PC-3 (cell line): ENCODE measurements at regions of chr1 and their contacts with region 1.

Region 1: DNA sequence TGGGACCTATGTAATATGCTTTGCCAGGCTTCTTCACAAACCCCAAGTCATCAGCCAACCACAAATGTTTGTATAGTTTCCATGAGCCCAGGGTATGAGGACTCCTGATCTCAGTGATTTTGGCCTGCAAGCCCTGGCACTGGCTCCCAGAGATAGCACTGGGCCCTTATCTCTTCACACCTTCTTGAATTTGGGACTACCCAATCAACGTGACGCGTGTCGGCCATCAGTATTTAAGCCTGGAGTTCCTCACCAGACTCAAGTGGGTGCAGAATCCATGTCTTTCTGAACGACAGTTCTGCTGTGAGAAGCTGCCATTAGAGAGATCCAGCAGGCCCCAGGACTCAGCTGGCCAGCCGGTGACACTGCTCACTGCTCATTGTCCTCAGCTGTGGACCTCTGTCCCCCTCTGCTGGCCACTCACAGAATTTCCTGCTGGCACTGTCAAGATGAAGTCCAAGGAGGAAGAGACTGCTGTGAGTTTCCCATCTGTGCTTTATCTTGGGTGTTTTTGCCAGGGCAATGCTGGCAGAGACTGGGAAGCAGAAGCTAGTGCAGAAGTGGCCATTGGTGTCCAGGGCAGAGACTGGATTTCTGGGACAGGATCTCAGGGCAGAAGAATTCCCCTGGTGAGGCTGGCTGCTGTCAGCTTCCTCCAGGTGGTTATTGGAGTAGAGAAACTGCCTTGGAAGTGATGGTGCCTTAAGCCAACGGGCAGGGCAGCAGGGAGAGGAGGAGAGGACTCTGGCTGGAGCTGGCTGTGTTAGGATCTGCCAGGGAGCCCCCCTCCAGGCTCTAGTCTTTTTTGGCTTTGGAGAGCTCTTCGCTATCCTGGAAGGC is 28.4 kb downstream of the TMCC2 start:
- DNase-seq: peak; percentile 95
- ATAC-seq: peak; percentile 98
- H3K4me3 ChIP-seq: no peak overlapping the region
- H3K27ac ChIP-seq: no peak overlapping the region
- H3K4me1 ChIP-seq: peaks cover 12% of the 10 kb centered on the region
- H3K27me3 ChIP-seq: no peaks in the 10 kb centered on the region
- CTCF ChIP-seq: peak; percentile 98

Region 2: GRCh38 chr1:204806943-204807687 is 449.0 kb before region 1 on chr1:
- CTCF ChIA-PET with region 1: no interaction called
- POLR2A ChIA-PET with region 1: no interaction called
- intact Hi-C with region 1: loop called (anchors 5 kb)
- DNase-seq: peak; percentile 98
- ATAC-seq: peak; percentile 97
- H3K4me3 ChIP-seq: peak overlapping the region; percentile 67
- H3K27ac ChIP-seq: no peak overlapping the region
- H3K4me1 ChIP-seq: peaks cover 5% of the 10 kb centered on the region; the same call in 1 of the 2 replicates
- H3K27me3 ChIP-seq: 0 out of 2 replicates have a peak, but pooled peaks cover 3% of the 10 kb centered on the region
- CTCF ChIP-seq: peak; percentile 100

Region 3: GRCh38 chr1:204989266-204990058 is 266.7 kb before region 1 on chr1:
- CTCF ChIA-PET with region 1: interaction called, 5 read pairs
- POLR2A ChIA-PET with region 1: no interaction called
- intact Hi-C with region 1: loop called (anchors 1 kb)
- DNase-seq: peak; percentile 94
- ATAC-seq: peak; percentile 82
- H3K4me3 ChIP-seq: no peak overlapping the region
- H3K27ac ChIP-seq: no peak overlapping the region
- H3K4me1 ChIP-seq: no peaks in the 10 kb centered on the region
- H3K27me3 ChIP-seq: peaks cover 89% of the 10 kb centered on the region
- CTCF ChIP-seq: peak; percentile 100

Region 4: DNA sequence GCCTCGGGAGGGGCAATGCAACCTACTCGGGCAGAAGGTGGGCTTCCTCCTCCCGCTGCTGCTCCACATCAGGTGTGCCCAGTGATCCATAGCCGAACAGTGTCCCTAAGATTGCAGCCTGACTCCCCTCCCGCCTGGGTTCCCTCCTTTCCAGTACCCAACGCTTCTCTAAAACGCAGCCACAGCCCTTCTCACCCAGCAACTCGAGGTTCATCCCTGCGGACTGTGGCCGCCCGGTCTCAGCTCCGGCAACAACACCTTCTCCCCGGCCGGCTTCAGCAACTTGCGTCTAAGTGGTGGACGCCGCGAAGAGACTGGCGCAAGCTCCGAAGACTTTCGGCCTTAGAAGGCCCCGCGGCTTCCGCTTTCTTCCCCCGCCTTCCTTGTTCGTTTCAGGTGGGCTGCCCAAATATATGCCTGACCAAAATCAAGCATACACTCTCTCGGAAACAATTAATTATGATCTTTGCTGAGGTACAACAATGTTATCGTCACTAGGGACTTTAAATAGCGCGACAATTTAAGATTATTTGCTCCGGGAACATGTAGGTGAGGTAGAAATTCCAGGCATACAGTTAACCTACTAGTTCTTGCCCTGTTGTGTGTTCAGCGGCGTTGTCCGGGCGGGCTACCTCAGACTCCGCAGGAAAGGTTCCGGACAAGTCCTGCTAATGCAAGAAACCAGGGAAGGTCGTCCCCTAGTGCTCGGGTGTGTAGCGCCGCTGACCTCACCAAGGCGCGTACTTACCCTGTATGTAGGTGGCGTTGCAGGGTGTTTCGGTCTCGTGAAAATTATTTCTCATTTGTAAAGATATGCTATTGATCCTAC is 134.3 kb before region 1 on chr1 and contains the start of gene RBBP5:
- CTCF ChIA-PET with region 1: interaction called, 3 read pairs
- POLR2A ChIA-PET with region 1: no interaction called
- intact Hi-C with region 1: loop called (anchors 1 kb)
- DNase-seq: peak; percentile 99
- ATAC-seq: peak; percentile 98
- H3K4me3 ChIP-seq: peak within 1 kb of the TSS; percentile 73
- H3K27ac ChIP-seq: peak within 1 kb of the TSS; percentile 72
- H3K4me1 ChIP-seq: peaks cover 24% of the 10 kb centered on the region
- H3K27me3 ChIP-seq: no peaks in the 10 kb centered on the region
- CTCF ChIP-seq: peak; percentile 98
- total RNA-seq, gene RBBP5: 39.5 and 41.7 TPM in 2 replicates

Region 5: GRCh38 chr1:205179842-205180241 is 76.3 kb before region 1 on chr1:
- CTCF ChIA-PET with region 1: interaction called, 3 read pairs
- POLR2A ChIA-PET with region 1: no interaction called
- intact Hi-C with region 1: loop called (anchors 5 kb)
- DNase-seq: no peak
- ATAC-seq: no peak
- H3K4me3 ChIP-seq: no peak overlapping the region
- H3K27ac ChIP-seq: no peak overlapping the region
- H3K4me1 ChIP-seq: peaks cover 18% of the 10 kb centered on the region
- H3K27me3 ChIP-seq: no peaks in the 10 kb centered on the region
- CTCF ChIP-seq: no peak

Region 6: DNA sequence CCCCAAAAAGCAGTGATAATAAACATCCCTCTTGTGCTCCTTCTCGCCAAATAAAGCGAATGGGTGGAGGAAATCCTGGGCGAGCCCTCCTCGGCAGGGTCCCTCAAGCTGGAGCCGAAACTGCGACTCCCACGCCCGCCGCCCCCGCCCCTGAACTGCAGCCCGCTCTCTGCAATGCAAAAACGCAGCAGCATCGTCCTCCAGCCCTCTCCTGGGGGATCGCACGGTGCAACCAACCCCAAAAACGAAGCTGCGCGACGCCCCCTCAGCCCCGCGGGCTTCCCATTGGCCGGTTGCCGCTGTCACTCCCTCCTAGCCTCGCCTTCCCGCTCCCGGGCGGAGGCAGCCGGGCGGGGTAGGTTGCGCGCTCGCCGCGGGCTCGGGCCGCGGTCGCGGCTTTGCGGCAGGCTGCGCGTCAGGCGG is 28.6 kb before region 1 on chr1 and contains the start of gene TMCC2:
- CTCF ChIA-PET with region 1: interaction called, 22 read pairs
- POLR2A ChIA-PET with region 1: no interaction called
- intact Hi-C with region 1: loop called (anchors 1 kb)
- DNase-seq: peak; percentile 92
- ATAC-seq: peak; percentile 82
- H3K4me3 ChIP-seq: peak within 1 kb of the TSS; percentile 81
- H3K27ac ChIP-seq: no peak within 1 kb of the TSS
- H3K4me1 ChIP-seq: peaks cover 19% of the 10 kb centered on the region
- H3K27me3 ChIP-seq: no peaks in the 10 kb centered on the region
- CTCF ChIP-seq: no peak
- total RNA-seq, gene TMCC2: 8.7 and 11.3 TPM in 2 replicates

Region 7: DNA sequence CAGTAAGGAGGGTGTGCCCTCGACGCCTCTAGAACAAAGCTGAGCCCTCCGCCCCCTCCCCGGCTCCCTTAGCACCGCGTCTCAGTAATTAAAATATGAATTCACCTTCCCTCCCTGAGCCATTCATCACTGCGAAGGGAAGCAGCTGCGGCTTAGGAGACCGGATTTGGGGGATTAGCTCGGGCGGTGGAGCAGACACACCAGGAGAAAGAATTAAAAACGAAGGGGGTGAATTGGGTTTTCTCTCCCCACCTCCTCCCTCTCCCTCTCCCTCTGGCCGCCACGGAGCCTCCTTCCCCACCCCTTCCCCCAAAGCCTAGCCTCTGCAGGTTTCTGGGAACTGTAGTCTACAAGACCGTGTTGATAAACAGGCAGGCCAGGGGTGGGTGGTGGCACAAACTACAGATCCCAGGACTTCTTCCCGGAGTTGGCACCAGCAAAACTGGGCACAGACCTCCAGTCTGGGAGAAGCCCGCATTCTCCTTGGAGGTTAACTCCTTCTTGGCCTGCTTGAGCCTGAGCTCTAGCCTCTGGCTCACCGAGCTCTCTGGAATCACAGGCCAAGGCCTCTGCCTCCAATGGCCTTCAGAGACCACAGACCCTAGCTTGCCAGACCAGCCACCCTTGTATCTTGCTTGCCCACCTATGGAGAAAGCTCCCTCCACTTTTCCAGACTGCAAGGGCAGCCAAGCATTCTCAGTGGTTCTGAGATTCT is 188.9 kb after region 1 on chr1:
- CTCF ChIA-PET with region 1: no interaction called
- POLR2A ChIA-PET with region 1: no interaction called
- intact Hi-C with region 1: no loop called
- DNase-seq: no peak
- ATAC-seq: no peak
- H3K4me3 ChIP-seq: no peak overlapping the region
- H3K27ac ChIP-seq: no peak overlapping the region
- H3K4me1 ChIP-seq: peaks cover 53% of the 10 kb centered on the region
- H3K27me3 ChIP-seq: no peaks in the 10 kb centered on the region
- CTCF ChIP-seq: no peak

Region 8: DNA sequence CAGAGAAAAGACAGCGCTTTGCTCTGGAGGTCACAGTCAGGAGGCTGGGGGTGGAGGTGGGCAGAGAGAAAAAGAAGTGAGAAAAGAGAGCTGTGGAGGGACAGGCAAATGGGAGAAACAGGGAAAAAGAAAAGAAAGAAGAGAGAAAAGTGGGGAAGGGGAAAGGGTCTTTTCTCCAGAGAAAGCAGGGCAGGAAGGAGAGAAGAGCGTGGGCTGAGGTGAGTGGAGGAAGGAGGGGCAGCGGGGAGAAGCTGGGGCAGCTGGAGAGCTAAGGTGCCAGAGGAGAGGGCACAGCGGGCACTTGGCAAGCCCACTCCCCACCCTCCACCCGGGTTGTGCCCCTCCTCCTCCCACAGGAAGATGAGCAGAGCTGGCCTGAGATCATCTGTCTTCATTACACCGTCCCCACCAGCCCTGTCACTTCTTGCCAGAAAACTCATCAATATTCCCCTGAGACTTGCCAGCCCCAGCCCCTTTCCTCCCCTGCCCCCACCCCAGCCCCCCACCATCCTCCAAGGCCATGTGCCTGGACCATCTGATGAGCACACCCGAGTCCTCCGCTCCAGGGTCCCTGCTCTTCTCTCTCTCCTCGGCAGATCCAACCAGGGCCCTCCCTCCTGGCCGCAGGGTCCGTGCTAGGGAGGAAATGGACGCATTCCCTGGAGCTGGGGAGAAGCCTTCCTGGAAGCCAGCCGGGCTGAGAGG is 216.7 kb after region 1 on chr1:
- CTCF ChIA-PET with region 1: no interaction called
- POLR2A ChIA-PET with region 1: no interaction called
- intact Hi-C with region 1: no loop called
- DNase-seq: no peak
- ATAC-seq: no peak
- H3K4me3 ChIP-seq: no peak overlapping the region
- H3K27ac ChIP-seq: no peak overlapping the region
- H3K4me1 ChIP-seq: peaks cover 9% of the 10 kb centered on the region
- H3K27me3 ChIP-seq: peaks cover 22% of the 10 kb centered on the region
- CTCF ChIP-seq: no peak